Breast epithelium (tissue), 4 donors: ENCODE measurements at regions of chr1 and their contacts with region 1.

Region 1: DNA sequence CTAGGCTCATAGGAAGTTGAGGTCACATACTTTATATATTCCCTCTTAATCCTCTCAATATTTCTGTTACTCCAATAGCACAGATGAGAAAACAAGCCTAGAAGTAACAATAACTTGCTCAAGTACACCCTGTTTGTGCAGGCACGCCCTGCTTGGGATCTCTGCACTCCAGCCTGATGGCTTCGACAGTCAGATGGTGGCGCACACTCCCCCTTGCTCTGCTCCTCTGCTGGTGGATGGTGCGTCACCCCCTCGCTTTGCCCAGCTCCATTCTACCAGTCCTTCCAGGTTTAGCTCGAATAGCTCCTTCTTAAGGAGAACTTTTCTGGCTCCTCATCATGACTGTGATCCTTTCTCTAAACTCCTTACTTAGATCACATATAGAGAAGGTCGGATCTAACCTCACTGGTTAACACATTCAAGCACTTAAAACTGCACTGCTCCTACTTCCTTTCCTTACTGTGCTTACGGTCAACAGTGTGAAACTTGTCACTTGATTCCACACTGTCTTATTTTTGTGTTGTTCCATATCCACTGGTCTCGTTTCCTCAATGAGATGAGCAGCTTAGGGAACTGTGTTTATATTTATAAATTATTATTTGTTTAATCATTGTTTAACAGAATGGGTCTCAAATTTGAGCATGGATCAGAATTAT is 3.0 kb downstream of the TSPAN2 start:
- DNase-seq: no peak
- H3K4me3 ChIP-seq: no peak overlapping the region
- H3K27ac ChIP-seq: no peak overlapping the region
- H3K4me1 ChIP-seq: no peaks in the 10 kb centered on the region
- H3K27me3 ChIP-seq: no peaks in the 10 kb centered on the region
- CTCF ChIP-seq: no peak
- POLR2A ChIP-seq: no peak

Region 2: DNA sequence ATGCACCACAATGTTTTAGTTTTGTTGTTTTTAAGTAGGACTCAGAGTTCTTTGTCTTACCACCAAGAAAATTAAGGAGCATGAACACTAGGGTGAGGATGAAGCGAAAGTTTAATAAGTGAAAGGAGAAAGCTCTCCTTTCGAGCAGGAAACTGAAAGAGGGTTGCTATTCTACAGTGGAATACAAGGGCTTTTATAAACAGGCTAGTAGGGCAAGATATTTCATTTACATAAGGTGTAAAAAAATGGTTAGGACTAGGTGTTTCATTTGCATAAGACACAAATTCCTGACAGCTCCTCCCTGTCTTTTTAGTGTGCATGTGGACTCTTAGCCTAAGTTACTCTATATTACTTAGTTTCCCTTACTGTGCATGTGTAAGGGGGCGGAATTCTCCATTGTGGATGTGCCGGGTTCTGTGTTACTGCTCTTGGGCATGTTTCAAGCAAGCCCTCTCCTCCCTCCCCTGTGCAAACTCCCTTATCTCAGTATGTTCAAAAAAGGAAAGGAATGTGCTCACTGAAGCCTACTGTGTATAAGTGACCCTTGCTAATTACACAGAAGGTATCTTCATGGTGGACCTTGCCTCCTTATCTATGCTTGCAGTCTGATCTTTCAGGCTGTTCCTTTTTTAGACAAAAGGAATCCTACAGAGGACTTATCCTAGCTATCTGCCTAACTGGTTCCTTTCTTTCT is 49.3 kb before region 1 on chr1:
- intact Hi-C with region 1: no loop called
- DNase-seq: no peak
- H3K4me3 ChIP-seq: no peak overlapping the region
- H3K27ac ChIP-seq: no peak overlapping the region
- H3K4me1 ChIP-seq: no peaks in the 10 kb centered on the region
- H3K27me3 ChIP-seq: no peaks in the 10 kb centered on the region
- CTCF ChIP-seq: no peak
- POLR2A ChIP-seq: no peak

Region 3: GRCh38 chr1:115052454-115053083 is 33.7 kb before region 1 on chr1:
- intact Hi-C with region 1: loop called (anchors 2 kb)
- DNase-seq: peak in 1 of 2 donors; percentile 42
- H3K4me3 ChIP-seq: no peak overlapping the region
- H3K27ac ChIP-seq: no peak overlapping the region
- H3K4me1 ChIP-seq: no peaks in the 10 kb centered on the region
- H3K27me3 ChIP-seq: peaks cover 0 to 5% of the 10 kb centered on the region in 2 donors
- CTCF ChIP-seq: peak; percentile 21 to 64 (median 62)
- POLR2A ChIP-seq: no peak

Region 4: DNA sequence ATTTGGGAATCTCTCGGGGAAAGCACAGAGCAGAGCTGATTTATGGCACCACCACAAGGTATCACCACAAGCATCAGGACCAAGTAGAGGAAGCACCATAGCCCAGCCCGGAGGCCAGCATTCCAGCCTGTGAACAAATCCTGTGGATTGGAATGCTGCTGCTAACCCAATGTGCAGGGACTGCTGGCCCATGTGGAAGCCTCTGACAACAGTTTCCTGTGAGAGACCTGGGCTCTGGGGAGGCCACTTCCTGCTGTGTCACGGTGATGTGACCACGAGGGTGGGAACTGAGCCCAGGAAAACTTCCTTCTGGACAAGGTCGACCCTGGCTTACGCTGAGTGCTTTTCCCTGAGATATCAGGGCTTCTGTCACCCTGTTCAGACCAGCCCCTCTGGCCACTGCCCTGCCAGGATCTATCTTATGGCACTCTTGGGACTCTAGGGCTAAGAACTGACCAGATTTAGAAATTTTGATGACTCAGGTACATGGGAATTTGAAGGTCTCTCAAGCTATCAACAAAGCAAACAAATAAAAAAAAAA is 340.0 kb after region 1 on chr1:
- intact Hi-C with region 1: no loop called
- DNase-seq: no peak
- H3K4me3 ChIP-seq: no peak overlapping the region
- H3K27ac ChIP-seq: no peak overlapping the region
- H3K4me1 ChIP-seq: no peaks in the 10 kb centered on the region
- H3K27me3 ChIP-seq: peaks cover 0 to 4% of the 10 kb centered on the region in 2 donors
- CTCF ChIP-seq: no peak
- POLR2A ChIP-seq: no peak